HEK293 (cell line): ENCODE measurements at regions of chr10 and their contacts with region 1.

Region 1: DNA sequence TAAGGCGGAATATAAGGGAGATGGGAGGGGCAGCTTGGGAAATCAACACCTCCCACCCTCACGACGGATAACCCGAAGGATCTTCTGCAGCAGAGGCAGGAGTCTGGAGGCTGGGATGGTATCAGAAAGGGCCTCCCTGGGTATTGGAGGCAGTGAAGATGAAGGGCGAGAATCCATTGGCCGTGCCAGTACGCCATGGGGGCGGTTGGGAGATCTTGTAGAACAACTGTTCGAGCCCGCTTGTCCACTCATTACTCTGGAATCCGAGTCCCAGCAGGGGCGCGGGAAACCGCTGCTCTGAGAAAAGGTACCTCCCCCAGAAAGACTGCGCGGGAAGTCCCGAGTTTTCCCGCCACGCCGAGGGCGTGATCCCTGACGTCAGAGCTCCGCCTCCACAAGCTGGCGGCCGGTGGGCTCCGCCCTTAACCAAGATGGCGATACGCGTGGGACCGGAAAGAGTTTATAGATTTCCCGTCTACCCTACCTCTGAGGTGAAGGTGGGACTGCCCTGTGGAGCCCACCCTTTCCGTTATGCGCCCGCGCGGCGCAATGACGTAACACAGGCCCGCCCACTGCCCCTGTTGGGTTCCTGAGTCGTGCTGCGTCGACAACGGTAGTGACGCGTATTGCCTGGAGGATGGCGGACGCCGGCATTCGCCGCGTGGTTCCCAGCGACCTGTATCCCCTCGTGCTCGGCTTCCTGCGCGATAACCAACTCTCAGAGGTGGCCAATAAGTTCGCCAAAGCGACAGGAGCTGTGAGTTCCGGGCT is at the start of gene NOLC1:
- H3K4me3 ChIP-seq: peak within 1 kb of the TSS; percentile 74
- H3K27ac ChIP-seq: peak within 1 kb of the TSS; percentile 73
- H3K4me1 ChIP-seq: peaks cover 2% of the 10 kb centered on the region; the same call in 1 of the 2 replicates
- CTCF ChIP-seq: no peak

Region 2: GRCh38 chr10:102132563-102133372 is 19.2 kb before region 1 on chr10 and contains the start of gene PPRC1:
- CTCF ChIA-PET with region 1: interaction called, 10 read pairs
- POLR2A ChIA-PET with region 1: interaction called, 11 read pairs
- H3K4me3 ChIP-seq: peak within 1 kb of the TSS; percentile 93
- H3K27ac ChIP-seq: peak within 1 kb of the TSS; percentile 99
- H3K4me1 ChIP-seq: peaks cover 22% of the 10 kb centered on the region
- CTCF ChIP-seq: peak; percentile 98

Region 3: DNA sequence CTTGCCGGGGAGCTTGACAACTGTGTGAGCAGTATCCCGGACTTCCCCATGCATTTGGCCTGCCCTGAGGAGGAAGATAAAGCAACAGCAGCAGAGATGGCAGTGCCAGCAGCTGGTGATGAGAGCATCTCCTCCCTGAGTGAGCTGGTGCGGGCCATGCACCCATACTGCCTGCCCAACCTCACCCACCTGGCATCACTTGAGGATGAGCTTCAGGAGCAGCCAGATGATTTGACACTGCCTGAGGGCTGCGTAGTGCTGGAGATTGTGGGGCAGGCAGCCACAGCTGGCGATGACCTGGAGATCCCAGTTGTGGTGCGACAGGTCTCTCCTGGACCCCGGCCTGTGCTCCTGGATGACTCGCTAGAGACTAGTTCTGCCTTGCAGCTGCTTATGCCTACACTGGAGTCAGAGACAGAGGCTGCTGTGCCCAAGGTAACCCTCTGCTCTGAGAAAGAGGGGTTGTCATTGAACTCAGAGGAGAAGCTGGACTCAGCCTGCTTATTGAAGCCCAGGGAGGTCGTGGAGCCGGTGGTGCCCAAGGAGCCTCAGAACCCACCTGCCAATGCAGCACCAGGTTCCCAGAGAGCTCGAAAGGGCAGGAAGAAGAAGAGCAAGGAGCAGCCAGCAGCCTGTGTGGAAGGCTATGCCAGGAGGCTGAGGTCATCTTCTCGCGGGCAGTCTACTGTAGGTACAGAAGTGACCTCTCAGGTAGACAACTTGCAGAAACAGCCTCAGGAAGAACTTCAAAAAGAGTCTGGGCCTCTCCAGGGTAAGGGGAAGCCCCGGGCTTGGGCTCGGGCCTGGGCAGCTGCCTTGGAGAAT is 12.5 kb before region 1 on chr10:
- CTCF ChIA-PET with region 1: interaction called, 3 read pairs
- POLR2A ChIA-PET with region 1: interaction called, 11 read pairs
- H3K4me3 ChIP-seq: no peak overlapping the region
- H3K27ac ChIP-seq: no peak overlapping the region
- H3K4me1 ChIP-seq: peaks cover 22% of the 10 kb centered on the region
- CTCF ChIP-seq: no peak

Region 4: GRCh38 chr10:102167861-102168260 is 15.9 kb after region 1 on chr10:
- CTCF ChIA-PET with region 1: interaction called, 31 read pairs
- POLR2A ChIA-PET with region 1: interaction called, 4 read pairs
- H3K4me3 ChIP-seq: no peak overlapping the region
- H3K27ac ChIP-seq: no peak overlapping the region
- H3K4me1 ChIP-seq: no peaks in the 10 kb centered on the region
- CTCF ChIP-seq: no peak